ENCODE measurements at regions of chr16 and their contacts with region 1.

Region 1: DNA sequence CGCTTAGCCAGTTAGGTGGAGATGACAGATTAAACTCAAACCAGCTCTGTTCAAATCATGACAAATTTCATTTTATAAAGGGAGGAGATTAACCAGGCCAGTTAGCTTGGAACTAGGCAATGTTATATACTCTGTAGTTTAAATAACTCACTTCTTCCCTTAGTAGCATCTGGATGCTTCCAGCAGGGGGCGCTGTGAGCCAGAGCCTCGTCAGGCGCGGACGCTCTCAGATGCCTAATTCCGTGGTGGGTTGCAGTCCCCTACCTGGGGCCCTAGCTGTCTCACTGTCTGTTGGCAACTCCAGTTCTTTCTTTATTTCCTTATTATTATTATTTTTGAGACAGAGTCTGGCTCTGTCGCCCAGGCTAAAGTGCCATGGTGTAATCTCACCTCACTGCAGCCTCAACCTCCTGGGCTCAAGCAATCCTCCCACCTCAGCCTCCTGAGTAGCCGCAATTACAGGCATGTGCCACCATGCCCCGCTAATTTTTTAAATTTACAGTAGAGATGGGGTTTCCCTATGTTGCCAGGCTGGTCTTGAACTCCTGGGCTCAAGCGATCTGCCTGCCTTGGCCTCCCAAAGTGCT is 17.3 kb upstream of the WFDC1 start:
- DNase-seq: peak; percentile 58 to 85 (median 76)
- H3K4me3 ChIP-seq: no peak overlapping the region
- H3K27ac ChIP-seq: no peak overlapping the region
- H3K4me1 ChIP-seq: no peaks in the 10 kb centered on the region
- H3K27me3 ChIP-seq: no peaks in the 10 kb centered on the region
- CTCF ChIP-seq: peak; percentile 56 to 77 (median 72)
- EP300 ChIP-seq: no peak
- POLR2A ChIP-seq: no peak

Region 2: DNA sequence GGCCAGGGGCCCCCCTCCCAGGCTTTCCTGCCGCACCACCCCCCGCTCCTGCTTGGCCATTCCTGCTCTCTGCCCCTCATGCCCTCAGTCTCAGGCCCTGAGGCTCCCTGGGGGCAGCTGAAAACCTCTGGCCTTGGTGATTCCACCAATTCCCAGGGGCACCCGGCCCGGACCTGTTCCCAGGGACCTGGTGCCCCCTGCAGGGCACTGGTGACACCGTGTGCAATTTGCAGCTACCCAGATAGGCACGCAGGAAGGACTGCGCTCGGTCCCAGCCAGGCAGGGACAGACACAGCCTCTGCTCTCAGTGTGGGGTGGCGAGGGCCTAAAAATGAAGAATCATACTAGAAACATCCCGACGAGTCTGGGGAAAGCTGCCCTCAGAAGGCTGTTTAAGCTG is 30.8 kb after region 1 on chr16:
- intact Hi-C with region 1: loop called in 1 of 4 experiments (anchors 1 kb)
- DNase-seq: peak; percentile 25 to 73 (median 40)
- H3K4me3 ChIP-seq: no peak overlapping the region
- H3K27ac ChIP-seq: no peak overlapping the region
- H3K4me1 ChIP-seq: peaks cover 2% of the 10 kb centered on the region
- H3K27me3 ChIP-seq: no peaks in the 10 kb centered on the region
- CTCF ChIP-seq: peak in 2 of 3 donors; percentile 25 to 28
- EP300 ChIP-seq: no peak
- POLR2A ChIP-seq: no peak

Region 3: DNA sequence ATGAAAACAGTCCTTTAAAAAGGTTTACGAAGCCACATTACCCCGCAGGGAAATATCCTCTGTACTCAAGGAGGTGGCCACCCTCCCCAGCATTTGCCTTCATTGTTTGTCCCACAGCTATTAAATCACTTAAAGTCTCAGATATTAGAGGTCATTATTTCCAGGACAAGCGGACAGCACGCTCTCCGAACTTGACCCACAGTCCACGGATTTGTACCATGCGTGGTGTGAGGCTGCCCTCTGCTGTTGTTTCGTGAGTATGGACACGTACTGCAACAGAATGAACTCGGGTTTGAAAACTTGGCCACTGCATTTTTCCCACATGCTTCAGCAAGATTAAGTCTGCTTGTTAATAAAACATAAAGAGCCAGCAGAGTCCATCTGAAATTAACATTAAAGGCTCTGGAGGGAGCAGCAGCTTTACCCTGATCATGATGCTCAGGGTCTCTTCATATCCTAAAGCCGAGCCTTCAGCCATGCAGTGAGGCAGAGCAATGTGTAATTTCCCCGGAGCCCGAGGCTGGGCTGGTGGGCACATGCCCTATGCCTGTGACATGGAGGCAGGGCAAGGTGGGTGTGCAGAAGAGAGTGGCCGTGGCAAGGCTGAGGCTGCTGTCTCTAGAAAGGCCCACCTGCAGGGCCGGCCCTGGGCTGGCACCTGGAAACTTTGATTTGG is 207.4 kb after region 1 on chr16:
- intact Hi-C with region 1: loop called (anchors 2 to 10 kb)
- DNase-seq: peak; percentile 60 to 84 (median 80)
- H3K4me3 ChIP-seq: no peak overlapping the region
- H3K27ac ChIP-seq: no peak overlapping the region
- H3K4me1 ChIP-seq: no peaks in the 10 kb centered on the region
- H3K27me3 ChIP-seq: no peaks in the 10 kb centered on the region
- CTCF ChIP-seq: peak; percentile 35 to 83 (median 79)
- EP300 ChIP-seq: no peak
- POLR2A ChIP-seq: no peak